ENCODE measurements at regions of chr7 and their contacts with region 1.

Region 1: GRCh38 chr7:117459735-117460134 is 20.1 kb upstream of the CFTR start:
- DNase-seq: no peak

Region 2: GRCh38 chr7:116726713-116727431 is 732.9 kb before region 1 on chr7:
- intact Hi-C with region 1: no loop called
- DNase-seq: no peak

Region 3: GRCh38 chr7:117427258-117427701 is 32.5 kb before region 1 on chr7 and contains the start of gene ASZ1:
- intact Hi-C with region 1: no loop called
- DNase-seq: no peak

Region 4: DNA sequence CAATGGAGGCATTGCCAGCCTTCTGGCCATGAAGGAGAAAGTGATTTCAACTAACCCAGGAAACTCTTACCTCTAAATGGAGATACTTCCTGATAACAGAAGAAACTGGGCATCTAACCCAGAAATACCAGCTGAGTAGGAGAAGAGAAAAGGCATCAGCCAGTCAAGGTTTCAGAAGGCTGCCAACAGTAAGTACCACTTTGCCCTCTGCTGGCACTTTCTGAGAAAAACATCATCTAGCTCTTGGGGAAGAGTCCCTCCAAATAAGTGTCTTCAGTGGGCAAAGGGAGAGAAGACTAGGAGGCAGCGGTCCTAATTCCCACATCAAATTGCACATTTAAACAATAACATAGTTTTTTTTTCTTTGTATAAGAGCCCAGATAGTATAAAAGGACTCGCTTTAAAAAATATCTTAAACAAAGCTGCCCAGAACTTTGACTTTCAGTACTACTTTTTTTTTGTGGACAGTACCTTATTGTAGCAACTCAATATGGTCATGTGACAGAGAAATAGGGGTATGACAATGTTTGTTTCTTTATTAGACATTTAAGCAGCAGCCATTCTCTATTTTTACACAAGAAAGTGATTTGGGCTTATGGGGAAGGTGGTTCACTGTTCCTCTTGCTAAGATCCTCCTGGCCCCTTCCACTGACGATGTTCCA is 256.2 kb after region 1 on chr7:
- intact Hi-C with region 1: loop called (anchors 10 kb)
- DNase-seq: peak in 27 of 42 donors; percentile 31 to 85 (median 62)